ENCODE measurements at regions of chr15 and their contacts with region 1.

Region 1: DNA sequence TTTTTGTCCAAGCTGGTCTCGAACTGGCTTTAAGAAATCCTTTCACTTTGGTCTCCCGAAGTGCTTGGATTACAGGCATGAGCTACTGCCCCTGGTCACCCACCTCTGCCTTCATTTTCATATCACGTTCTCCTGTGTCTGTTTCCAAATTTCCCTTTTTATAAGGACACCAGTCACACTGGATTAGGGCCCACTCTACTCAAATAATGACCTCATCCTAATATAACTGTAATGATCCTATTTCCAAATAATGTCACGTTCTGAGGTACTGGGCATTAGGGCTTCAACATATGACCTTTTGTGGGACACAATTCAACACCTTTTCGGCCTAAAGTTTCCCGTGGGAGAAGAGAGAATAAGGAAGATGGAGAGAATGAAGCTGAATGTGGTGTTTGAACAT is 72.4 kb upstream of the AGBL1 start:
- DNase-seq: no peak
- H3K4me3 ChIP-seq: no peak overlapping the region
- H3K27ac ChIP-seq: no peak overlapping the region
- H3K4me1 ChIP-seq: no peaks in the 10 kb centered on the region
- H3K27me3 ChIP-seq: no peaks in the 10 kb centered on the region
- CTCF ChIP-seq: no peak
- POLR2A ChIP-seq: no peak

Region 2: GRCh38 chr15:85961821-85962220 is 45.5 kb before region 1 on chr15:
- intact Hi-C with region 1: loop called (anchors 1 kb)
- DNase-seq: no peak
- H3K4me3 ChIP-seq: no peak overlapping the region
- H3K27ac ChIP-seq: no peak overlapping the region
- H3K4me1 ChIP-seq: no peaks in the 10 kb centered on the region
- H3K27me3 ChIP-seq: no peaks in the 10 kb centered on the region
- CTCF ChIP-seq: no peak
- POLR2A ChIP-seq: no peak

Measured in vagina (tissue), 2 donors.